PC-3 (cell line): ENCODE measurements at regions of chr14 and their contacts with region 1.

Region 1: GRCh38 chr14:35438910-35439713 is 34.6 kb upstream of the NFKBIA start:
- DNase-seq: peak; percentile 37
- ATAC-seq: no peak; the same call in 1 of the 2 replicates
- H3K4me3 ChIP-seq: no peak overlapping the region
- H3K27ac ChIP-seq: no peak overlapping the region
- H3K4me1 ChIP-seq: no peaks in the 10 kb centered on the region
- H3K27me3 ChIP-seq: no peaks in the 10 kb centered on the region
- CTCF ChIP-seq: peak; percentile 60

Region 2: GRCh38 chr14:35365130-35366055 is 73.7 kb before region 1 on chr14:
- CTCF ChIA-PET with region 1: no interaction called
- POLR2A ChIA-PET with region 1: no interaction called
- intact Hi-C with region 1: no loop called
- DNase-seq: peak; percentile 84
- ATAC-seq: peak; percentile 82
- H3K4me3 ChIP-seq: no peak overlapping the region
- H3K27ac ChIP-seq: peak overlapping the region; percentile 63
- H3K4me1 ChIP-seq: peaks cover 29% of the 10 kb centered on the region
- H3K27me3 ChIP-seq: no peaks in the 10 kb centered on the region
- CTCF ChIP-seq: no peak

Region 3: DNA sequence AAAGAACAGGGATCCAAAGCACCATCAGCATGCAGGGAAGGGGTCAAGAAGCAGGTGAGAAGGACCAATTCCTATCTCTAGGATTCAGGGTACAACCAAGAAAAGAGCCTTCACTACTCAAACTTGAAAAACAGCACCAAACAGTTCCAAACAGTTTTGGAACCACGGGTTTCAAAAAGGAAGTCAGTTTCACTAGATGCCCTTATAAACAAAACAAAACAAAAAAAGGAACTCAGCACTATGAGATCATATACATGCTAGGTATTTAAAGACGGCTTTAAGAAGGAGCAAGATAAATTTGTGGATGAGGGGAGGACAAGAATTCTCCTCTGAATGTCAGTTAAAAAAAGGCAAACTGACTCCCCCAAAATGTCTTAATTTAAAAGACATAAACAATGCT is 100.9 kb after region 1 on chr14:
- CTCF ChIA-PET with region 1: interaction called, 14 read pairs
- POLR2A ChIA-PET with region 1: no interaction called
- intact Hi-C with region 1: no loop called
- DNase-seq: no peak
- ATAC-seq: no peak
- H3K4me3 ChIP-seq: no peak overlapping the region
- H3K27ac ChIP-seq: no peak overlapping the region
- H3K4me1 ChIP-seq: 0 out of 2 replicates have a peak, but pooled peaks cover 7% of the 10 kb centered on the region
- H3K27me3 ChIP-seq: peaks cover 2% of the 10 kb centered on the region
- CTCF ChIP-seq: no peak

Region 4: DNA sequence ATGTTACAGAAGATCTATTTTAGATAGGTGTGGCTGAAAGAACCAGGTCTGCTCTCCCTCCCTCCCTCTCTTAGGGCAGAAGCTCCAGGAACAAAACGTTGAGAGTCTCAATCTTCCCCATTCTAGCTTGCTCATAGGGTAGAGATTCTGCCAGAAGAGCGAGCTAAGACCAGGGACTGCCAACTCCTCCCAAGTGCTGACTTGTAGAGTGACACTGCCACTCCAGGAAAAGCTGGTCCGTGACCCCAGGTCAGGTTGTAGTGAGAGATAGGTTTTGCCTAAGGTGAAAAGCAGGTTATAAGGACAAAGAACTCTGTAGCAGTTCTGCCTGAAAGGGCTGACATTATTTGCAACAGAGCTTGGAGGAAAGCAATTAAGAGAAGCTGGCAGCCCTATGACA is 168.3 kb after region 1 on chr14:
- CTCF ChIA-PET with region 1: interaction called, 10 read pairs
- POLR2A ChIA-PET with region 1: no interaction called
- intact Hi-C with region 1: no loop called
- DNase-seq: no peak
- ATAC-seq: no peak
- H3K4me3 ChIP-seq: no peak overlapping the region
- H3K27ac ChIP-seq: no peak overlapping the region
- H3K4me1 ChIP-seq: no peaks in the 10 kb centered on the region
- H3K27me3 ChIP-seq: no peaks in the 10 kb centered on the region
- CTCF ChIP-seq: no peak